GM10248 (cell line): ENCODE measurements at regions of chr20 and their contacts with region 1.

Region 1: DNA sequence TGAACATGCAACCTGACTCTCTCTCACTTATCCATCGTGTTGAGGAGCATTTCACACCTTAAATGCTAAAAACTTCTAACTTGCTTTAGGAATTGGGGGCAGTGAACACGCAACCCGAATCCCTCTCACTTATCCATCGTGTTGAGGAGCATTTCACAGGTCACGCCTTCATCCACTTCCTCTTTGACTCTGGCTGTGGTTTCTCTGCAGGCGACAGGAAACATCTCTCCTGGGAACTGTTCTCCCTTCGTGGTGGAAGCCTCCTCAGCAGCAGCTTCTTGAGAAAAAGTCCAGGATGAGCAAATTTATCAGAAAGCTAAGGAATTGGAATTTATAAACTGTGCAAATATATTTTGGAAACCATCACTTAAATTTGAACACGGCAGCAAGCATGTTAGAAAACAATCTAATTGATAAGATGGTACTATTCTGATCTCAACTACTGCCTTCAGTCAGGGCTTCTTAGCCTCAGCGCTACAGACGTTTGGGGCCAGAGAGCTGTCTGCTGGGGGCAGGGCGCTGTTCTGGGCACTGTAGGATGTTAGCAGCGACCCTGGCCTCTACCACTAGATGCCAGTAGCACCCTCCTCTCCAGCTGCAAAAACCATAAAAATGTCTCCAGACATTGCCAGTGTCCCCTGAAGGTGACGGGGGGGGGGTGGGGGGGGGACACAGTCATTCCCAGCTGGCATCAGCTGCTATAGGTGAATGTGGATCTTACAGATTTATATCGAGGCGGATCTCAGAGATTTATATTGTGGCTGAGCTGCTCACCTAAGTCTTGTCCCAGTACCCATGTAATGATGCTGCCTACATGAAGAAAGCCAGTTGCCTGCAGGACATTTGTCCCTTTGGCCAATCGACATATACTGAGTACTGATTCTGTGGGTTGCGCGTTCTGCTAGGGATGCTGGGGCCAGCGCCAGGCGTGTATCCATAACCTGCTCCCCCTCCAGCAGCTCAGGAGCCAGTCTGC is 26.2 kb downstream of the CTCFL start:
- DNase-seq: no peak
- CTCF ChIP-seq: peak; percentile 29

Region 2: DNA sequence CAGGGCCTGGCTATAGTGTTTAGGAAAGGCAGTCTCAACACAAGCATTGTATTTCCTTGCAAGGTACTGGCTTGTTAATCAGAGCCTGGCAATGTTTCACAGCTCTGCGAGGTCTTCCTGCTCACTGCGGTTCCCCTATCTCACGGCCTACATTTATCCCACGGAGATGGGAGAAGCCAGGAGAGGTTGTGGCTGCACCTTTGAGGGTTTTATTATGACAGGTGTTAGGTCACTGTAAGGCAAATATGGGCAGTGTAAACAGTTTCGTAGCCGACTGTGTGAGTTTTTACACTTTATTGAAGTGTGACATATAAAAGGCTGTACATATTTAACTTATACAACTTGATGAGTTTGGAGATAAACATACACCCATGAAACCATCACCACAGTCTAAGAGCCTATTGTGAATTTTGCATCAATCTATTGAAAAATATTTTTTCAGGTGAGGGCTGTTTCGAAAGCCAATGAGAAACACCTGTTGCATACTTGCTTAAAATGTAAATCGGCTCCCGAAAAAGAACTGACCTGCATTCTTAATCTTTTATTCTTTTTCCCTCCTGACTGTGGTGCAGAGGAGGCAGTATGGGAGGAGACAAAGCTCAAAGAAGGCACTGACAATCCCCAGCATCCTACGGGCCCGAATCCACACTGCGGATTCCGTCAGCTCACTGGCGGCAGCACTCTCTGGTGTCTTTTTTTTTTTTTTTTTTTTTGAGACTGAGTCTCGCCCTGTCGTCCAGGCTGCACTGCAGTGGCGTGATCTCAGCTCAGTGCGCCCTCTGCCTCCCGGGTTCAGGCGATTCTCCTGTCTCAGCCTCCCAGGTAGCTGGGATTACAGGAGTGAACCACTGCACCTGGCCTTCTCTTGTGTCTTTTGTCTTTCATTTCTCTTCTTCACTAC is 115.0 kb before region 1 on chr20:
- CTCF ChIA-PET with region 1: interaction called, 38 read pairs
- POLR2A ChIA-PET with region 1: no interaction called
- DNase-seq: no peak
- CTCF ChIP-seq: no peak

Region 3: GRCh38 chr20:57391074-57391554 is 107.6 kb before region 1 on chr20 and contains the start of gene RBM38:
- CTCF ChIA-PET with region 1: interaction called, 17 read pairs
- POLR2A ChIA-PET with region 1: interaction called, 3 read pairs
- DNase-seq: peak; percentile 95
- CTCF ChIP-seq: no peak

Region 4: DNA sequence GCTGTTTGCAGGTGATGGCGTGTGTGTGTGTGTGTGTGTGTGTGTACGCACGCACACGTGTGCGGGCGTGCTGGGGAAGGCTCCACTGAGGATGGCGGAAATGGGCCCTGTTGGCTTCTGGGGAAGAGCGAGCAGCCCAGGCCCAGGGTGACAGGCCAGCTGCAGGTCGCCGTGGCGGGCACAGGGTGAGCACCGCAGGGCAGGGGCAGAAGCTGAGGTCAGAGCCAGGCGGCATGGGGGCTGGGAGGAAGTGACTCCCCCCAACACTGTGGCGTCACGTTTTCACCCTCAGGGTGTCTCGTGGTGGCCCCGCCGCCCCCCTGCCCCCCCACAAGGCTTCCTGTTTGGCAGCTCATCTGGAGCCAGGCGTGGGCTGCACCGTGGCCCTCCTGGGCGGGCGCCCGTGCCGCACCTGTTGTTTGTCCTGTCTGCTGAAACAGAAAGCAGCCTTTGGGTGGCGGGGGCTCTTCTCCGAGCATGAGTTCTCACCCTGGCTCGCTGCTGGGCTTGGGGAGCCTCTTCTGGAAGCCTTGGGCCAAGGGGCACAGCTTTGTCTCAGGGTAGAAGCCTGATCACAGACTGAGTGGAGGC is 100.4 kb before region 1 on chr20:
- CTCF ChIA-PET with region 1: interaction called, 10 read pairs
- POLR2A ChIA-PET with region 1: no interaction called
- DNase-seq: peak; percentile 85
- CTCF ChIP-seq: no peak

Region 5: DNA sequence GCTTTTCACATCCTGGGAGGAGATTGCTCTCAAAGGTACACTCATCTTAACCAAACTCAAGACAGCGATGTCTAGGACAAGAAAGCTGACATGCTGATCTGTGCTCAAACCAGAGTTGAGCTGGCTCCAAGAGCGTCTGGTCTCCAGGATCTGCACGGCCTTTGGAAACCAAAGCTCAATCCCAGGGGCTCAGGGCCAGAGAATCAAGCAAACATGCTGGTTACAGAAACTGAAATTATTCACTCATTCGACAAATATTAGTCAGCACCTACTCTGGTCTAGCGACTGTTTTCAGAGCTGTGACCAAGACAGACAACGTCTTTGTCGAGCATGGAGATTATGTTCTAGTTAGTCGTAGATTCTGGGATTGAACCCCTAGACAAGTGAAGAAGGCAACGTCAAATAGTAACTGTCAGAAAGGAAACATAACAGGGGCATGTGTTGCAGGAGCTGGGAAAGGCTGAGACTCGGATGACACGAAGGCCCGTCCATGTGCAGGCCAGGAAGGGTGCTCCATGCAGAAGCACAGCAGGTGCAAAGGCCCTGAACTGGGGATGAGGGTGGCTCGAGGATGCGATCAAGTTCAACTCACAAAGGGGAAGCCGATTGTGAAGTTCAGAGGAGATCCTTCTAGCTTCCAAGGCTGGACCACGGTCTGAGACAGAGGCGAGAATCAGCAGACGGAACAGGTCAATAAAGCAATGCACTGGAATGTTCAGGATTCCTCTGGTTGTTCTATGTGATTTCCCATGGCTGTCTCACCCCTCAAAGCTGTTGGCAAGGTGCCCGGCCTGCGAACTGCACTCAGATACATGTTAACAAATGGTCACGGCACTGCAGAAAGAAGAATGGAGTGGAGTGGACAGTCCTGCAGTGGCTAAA is 49.7 kb after region 1 on chr20:
- CTCF ChIA-PET with region 1: no interaction called
- POLR2A ChIA-PET with region 1: no interaction called
- DNase-seq: no peak
- CTCF ChIP-seq: no peak

Region 6: GRCh38 chr20:57693002-57693640 is 194.4 kb after region 1 on chr20:
- CTCF ChIA-PET with region 1: no interaction called
- POLR2A ChIA-PET with region 1: no interaction called
- DNase-seq: no peak
- CTCF ChIP-seq: peak; percentile 14

Region 7: DNA sequence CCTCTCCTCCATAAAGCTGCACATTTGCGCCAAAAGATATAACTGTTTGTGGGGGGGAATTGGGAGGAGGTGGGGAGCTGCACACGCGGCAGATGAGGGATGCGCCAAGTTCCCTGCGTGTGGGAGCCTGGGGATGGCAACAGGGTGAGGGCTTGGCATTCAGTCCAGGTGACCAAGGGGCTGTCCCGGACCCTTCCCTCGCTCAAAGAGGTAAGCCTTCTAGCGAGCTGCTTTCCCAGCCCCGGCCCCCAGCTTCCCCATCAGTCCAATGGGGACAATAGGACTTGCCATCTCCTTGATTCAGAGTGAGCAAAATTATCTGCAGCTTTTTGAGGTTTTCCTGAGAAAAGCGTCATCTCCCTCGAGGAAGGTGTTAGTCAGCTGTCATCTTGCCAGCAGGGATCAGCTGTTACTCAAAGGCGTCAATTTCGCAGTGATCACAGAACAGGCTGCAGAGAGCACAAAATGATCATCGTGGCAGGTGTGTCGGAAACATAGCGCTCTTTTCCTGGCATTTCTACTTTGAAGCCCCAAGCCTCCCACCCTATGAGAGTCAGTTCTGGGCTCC is 1686.3 kb after region 1 on chr20:
- CTCF ChIA-PET with region 1: no interaction called
- POLR2A ChIA-PET with region 1: no interaction called
- DNase-seq: no peak
- CTCF ChIP-seq: no peak